ENCODE measurements at regions of chr13 and their contacts with region 1.

Region 1: DNA sequence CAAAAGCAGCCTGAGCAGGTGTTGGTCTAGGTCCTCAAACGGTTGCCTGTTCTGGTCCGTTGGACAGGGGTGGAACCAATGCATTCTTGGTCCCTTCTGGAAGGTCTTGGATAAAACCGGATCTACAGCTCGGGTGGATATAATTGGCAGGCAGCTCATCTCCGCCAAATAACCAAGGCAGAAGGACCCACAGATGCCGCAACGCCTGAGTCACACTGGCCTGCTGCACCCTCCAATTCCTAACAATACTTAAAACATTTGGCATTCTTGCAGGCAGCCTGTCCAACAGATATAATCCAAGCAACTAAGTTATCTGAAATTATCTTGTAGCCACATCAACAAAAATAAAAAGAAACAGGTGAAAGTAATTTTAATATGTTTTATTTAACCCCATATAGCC is 59.0 kb upstream of the FGF14 start:
- DNase-seq: no peak
- ATAC-seq: no peak
- H3K4me3 ChIP-seq: no peak overlapping the region
- H3K27ac ChIP-seq: no peak overlapping the region
- H3K4me1 ChIP-seq: no peaks in the 10 kb centered on the region
- H3K27me3 ChIP-seq: no peaks in the 10 kb centered on the region; the same call in 1 of the 2 replicates
- CTCF ChIP-seq: no peak
- POLR2A ChIP-seq: no peak
- RAD21 ChIP-seq: no peak

Region 2: DNA sequence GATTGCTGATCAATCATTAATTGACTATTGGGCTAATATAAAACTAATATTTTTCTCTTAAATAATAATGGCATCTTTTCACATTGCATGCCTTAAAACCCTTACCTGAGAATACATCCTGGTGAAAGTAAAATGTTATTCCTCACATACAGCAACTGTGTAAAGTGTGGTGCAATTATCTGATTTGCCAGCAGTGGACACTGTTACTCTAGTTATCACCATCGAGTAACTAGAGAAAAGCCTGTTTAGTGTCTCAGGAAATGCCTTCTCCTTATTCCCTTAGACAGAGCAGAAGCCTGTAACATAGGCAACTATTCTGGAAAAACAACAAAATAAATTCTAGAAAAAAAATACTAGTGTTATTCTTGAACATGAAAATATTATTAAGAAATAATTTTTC is 518.8 kb before region 1 on chr13:
- CTCF ChIA-PET with region 1: no interaction called
- POLR2A ChIA-PET with region 1: no interaction called
- dilution Hi-C with region 1: no loop called
- in situ Hi-C with region 1: no loop called
- intact Hi-C with region 1: loop called (anchors 1 kb)
- DNase-seq: peak; percentile 16
- ATAC-seq: peak; percentile 77; the same call in 1 of the 2 replicates
- H3K4me3 ChIP-seq: no peak overlapping the region
- H3K27ac ChIP-seq: no peak overlapping the region
- H3K4me1 ChIP-seq: no peaks in the 10 kb centered on the region
- H3K27me3 ChIP-seq: no peaks in the 10 kb centered on the region
- CTCF ChIP-seq: peak; percentile 56
- POLR2A ChIP-seq: no peak
- RAD21 ChIP-seq: peak; percentile 55

Region 3: GRCh38 chr13:102141625-102142472 is 319.0 kb before region 1 on chr13:
- CTCF ChIA-PET with region 1: interaction called, 5 read pairs
- POLR2A ChIA-PET with region 1: no interaction called
- dilution Hi-C with region 1: no loop called
- in situ Hi-C with region 1: loop called (anchors 25 kb)
- intact Hi-C with region 1: loop called (anchors 1 kb)
- DNase-seq: peak; percentile 35
- ATAC-seq: peak; percentile 53
- H3K4me3 ChIP-seq: no peak overlapping the region
- H3K27ac ChIP-seq: no peak overlapping the region
- H3K4me1 ChIP-seq: no peaks in the 10 kb centered on the region
- H3K27me3 ChIP-seq: no peaks in the 10 kb centered on the region
- CTCF ChIP-seq: peak; percentile 72
- POLR2A ChIP-seq: no peak
- RAD21 ChIP-seq: peak; percentile 59

Region 4: GRCh38 chr13:102197193-102197592 is 263.6 kb before region 1 on chr13:
- CTCF ChIA-PET with region 1: no interaction called
- POLR2A ChIA-PET with region 1: no interaction called
- dilution Hi-C with region 1: no loop called
- in situ Hi-C with region 1: no loop called
- intact Hi-C with region 1: loop called (anchors 1 kb)
- DNase-seq: peak; percentile 8
- ATAC-seq: no peak
- H3K4me3 ChIP-seq: no peak overlapping the region
- H3K27ac ChIP-seq: no peak overlapping the region
- H3K4me1 ChIP-seq: peaks cover 4% of the 10 kb centered on the region; the same call in 1 of the 2 replicates
- H3K27me3 ChIP-seq: no peaks in the 10 kb centered on the region
- CTCF ChIP-seq: peak; percentile 23
- POLR2A ChIP-seq: no peak
- RAD21 ChIP-seq: peak; percentile 32; the same call in 1 of the 2 replicates

Measured in IMR-90 (cell line).